OCI-LY7 (cell line): ENCODE measurements at regions of chr3 and their contacts with region 1.

Region 1: GRCh38 chr3:9749645-9750555 is at the start of gene OGG1:
- DNase-seq: peak; percentile 99
- H3K4me3 ChIP-seq: peak within 1 kb of the TSS; percentile 81
- H3K27ac ChIP-seq: peak within 1 kb of the TSS; percentile 88
- H3K4me1 ChIP-seq: peaks cover 40% of the 10 kb centered on the region
- CTCF ChIP-seq: no peak
- total RNA-seq, gene OGG1: 98.9 and 121 TPM in 2 replicates

Region 2: DNA sequence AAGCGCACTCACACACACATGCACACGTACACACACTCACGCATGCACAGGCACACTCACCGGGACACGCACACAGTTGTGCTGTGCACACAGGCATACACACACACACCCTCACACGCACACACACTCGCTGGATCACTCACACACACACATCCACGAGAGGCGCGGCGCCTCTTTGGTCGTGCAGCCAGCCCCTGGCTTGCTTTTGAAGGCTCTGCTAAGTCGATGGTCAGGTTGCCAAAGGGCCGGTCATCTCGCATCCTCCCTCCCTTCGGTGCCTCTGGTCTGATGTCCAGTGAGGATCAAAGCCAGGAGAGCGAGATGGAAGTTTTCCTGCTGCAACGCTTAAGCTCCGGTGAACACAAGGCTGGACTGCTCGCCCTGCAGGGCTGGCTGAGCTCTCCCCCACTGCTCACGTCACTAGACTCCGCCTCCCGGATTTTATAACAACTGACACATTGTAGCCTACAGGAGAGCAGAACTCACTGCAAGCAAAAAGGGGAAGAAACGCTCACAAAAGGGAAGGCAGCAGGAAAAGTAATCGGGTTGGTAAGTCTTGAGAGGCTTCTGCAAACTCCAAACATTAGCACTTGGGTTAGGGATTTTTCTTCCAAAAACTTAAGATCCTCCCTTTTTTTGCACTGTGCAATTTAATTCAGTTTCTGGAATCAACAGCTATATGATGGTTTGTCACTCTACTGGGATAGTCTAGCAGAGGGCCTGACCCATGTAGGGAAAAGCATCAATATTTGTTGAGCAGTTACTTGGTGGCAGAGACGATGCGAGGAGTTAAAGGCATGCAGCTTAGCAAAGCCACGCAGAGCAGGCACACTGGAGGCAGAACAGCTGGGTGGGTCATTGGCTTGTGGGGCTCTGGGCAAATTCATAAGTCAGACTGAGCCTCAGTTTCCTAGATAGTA is 500.4 kb before region 1 on chr3 and contains the start of gene SRGAP3:
- CTCF ChIA-PET with region 1: no interaction called
- POLR2A ChIA-PET with region 1: no interaction called
- intact Hi-C with region 1: no loop called
- DNase-seq: peak; percentile 82
- H3K4me3 ChIP-seq: peak within 1 kb of the TSS; percentile 58
- H3K27ac ChIP-seq: no peak within 1 kb of the TSS
- H3K4me1 ChIP-seq: peaks cover 12% of the 10 kb centered on the region
- CTCF ChIP-seq: 0 out of 2 replicates have a peak, but pooled peaks have one; percentile 23
- total RNA-seq, gene SRGAP3: 0.10 and 1.7 TPM in 2 replicates

Region 3: DNA sequence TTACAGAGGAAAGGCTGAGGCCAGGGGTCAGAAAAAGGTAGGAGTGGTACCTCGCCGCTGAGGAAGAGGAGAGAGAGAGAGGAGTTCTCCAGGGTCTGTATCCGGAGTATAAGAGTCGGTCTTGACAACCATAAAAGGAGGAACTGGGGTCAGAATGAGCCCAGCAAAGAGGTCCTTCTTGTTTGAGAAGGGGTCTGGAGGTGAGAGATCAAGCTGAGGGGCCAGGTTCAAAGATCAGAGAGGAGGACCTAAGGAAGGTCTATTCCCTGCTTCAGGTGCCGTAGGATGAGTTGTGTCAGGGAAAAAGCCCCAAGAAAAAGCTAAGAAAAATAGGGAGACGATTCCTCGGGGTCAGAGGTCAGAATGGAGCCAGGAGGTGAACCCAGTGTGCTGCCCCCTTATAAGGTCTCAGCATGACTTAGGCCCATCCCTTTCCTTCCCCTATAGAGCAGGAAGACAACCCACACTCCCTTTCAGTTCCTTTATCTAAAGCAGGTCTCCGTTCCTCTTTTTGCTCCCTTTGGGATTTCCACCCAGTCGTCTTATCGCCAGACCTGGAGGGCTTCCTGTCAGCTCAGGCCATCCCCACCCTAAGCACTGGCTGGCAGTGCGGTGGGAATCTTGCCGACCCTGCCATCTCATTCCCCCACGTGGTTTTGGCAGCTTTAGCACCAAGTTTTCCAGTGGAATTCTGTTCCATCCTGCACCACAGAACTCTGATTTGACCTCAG is 99.9 kb before region 1 on chr3:
- CTCF ChIA-PET with region 1: no interaction called
- POLR2A ChIA-PET with region 1: no interaction called
- intact Hi-C with region 1: loop called (anchors 1 kb)
- DNase-seq: peak; percentile 60
- H3K4me3 ChIP-seq: peak overlapping the region; percentile 83
- H3K27ac ChIP-seq: peak overlapping the region; percentile 51
- H3K4me1 ChIP-seq: peaks cover 46% of the 10 kb centered on the region
- CTCF ChIP-seq: no peak

Region 4: DNA sequence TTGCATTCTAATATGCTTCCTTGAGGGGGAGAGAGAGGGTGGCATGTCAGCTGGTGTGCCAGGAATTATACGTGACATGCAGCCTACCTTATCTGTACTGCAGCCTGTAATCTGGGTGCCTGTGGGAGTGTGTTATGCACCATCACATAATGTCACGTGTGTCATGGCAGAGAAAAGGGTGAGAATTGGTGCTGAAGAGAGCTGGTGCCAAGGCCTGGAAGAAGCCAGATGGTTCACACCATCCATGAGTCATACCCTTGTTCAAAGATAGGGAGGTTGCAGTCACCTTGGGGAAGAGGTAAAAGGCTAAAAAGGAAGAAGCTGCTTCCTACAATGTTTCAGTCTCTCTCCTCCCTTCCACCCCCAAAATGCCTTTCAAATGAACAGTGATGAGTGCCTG is 13.1 kb before region 1 on chr3:
- CTCF ChIA-PET with region 1: interaction called, 4 read pairs
- POLR2A ChIA-PET with region 1: interaction called, 16 read pairs
- intact Hi-C with region 1: no loop called
- DNase-seq: no peak
- H3K4me3 ChIP-seq: no peak overlapping the region
- H3K27ac ChIP-seq: no peak overlapping the region
- H3K4me1 ChIP-seq: peaks cover 12% of the 10 kb centered on the region
- CTCF ChIP-seq: no peak

Region 5: DNA sequence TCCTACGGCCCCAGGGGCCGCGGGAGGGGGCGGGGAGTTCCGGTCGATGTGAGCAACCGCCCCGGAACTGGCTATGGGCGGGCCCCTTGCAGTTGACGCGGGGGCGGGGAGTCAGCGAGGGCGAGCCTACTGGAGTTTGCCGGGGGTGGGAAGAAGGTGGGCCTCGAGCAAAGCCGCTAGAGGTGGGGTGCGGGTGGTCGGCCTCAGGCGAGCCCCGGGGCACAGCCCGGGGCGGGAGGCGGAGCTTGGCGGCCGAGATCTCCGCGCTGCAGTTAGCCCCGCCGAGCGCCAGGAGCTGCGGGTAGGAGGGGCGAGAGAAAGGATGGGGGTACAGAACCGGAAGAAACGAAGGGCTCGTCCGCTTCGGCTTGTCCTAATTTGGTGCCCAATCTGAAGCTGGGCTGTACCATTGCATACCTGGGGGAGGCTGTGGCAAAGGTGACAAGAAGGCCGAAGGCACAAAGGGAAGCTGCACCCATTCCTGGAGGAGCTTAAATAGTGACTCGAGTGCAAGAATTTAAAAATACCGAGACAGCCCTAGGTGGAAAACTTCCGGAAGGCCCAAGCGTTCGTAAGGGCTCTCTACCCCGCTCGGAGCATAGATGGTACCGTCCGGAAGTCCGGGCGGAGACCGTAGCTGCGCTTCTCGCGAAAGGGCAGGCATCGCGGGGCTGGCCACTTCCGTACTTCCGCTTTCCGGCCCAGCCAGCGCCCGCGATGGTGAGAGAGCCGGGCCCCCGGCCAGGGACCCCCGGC is 42.7 kb after region 1 on chr3 and contains the starts of genes ARPC4 and TADA3:
- CTCF ChIA-PET with region 1: no interaction called
- POLR2A ChIA-PET with region 1: interaction called, 17 read pairs
- intact Hi-C with region 1: loop called (anchors 1 kb)
- DNase-seq: peak; percentile 98
- H3K4me3 ChIP-seq: peak within 1 kb of the TSS; percentile 96
- H3K27ac ChIP-seq: peak within 1 kb of the TSS; percentile 72
- H3K4me1 ChIP-seq: peaks cover 47% of the 10 kb centered on the region
- CTCF ChIP-seq: no peak
- total RNA-seq, gene ARPC4: 89.8 and 99.5 TPM in 2 replicates
- total RNA-seq, gene TADA3: 51.6 and 62.0 TPM in 2 replicates